Ascending aorta (tissue), 2 donors: ENCODE measurements at regions of chr9 and their contacts with region 1.

Region 1: GRCh38 chr9:121770415-121771273 is 119.2 kb downstream of the DAB2IP start:
- DNase-seq: no peak
- H3K4me3 ChIP-seq: no peak overlapping the region
- H3K27ac ChIP-seq: peak overlapping the region; percentile 82 to 94
- H3K4me1 ChIP-seq: peaks cover 32 to 39% of the 10 kb centered on the region in 2 donors
- H3K27me3 ChIP-seq: no peaks in the 10 kb centered on the region
- CTCF ChIP-seq: no peak

Region 2: DNA sequence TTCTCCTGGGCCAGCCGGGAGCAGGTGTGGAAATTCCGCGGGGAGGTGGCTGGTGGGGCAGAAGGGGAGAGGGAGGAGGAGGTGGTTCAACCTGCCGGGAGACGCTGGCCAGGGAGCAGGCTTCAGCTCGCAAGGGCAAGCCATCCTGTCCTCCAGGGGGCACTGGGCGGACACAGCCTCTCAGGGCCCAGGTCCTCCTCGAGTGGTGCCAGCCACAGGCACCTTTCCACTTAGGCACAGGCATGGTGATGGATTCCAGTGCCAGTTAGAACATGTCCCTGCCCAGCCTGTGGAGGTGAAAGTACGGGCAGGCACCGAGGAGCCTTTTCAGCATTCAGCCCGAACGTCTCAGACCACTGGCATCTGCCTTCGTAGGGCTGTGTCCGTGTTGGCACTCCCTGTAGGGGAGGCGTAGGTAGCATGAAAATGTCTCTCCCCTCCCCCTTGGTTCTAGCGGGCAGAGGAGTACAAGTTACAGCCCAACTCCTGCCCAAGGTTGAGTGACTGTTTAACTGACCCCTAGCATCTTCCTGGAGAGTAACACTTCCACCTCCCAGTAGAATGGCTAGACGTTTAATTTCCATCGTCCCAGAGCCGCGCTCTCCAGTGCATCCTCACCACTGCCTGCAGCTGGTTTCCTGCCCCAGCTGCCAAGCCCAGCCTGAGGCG is 70.3 kb before region 1 on chr9:
- intact Hi-C with region 1: loop called (anchors 5 kb)
- DNase-seq: peak in 1 of 2 donors; percentile 85
- H3K4me3 ChIP-seq: peak overlapping the region; percentile 72 to 79
- H3K27ac ChIP-seq: peak overlapping the region; percentile 57 to 65
- H3K4me1 ChIP-seq: peaks cover 7 to 8% of the 10 kb centered on the region in 2 donors
- H3K27me3 ChIP-seq: no peaks in the 10 kb centered on the region
- CTCF ChIP-seq: peak; percentile 55 to 73 (median 73)

Region 3: GRCh38 chr9:121992571-121993212 is 222.0 kb after region 1 on chr9:
- intact Hi-C with region 1: loop called (anchors 5 kb)
- DNase-seq: peak in 1 of 2 donors; percentile 76
- H3K4me3 ChIP-seq: no peak overlapping the region
- H3K27ac ChIP-seq: no peak overlapping the region
- H3K4me1 ChIP-seq: peaks cover 0 to 1% of the 10 kb centered on the region in 2 donors
- H3K27me3 ChIP-seq: no peaks in the 10 kb centered on the region
- CTCF ChIP-seq: peak; percentile 75 to 79 (median 78)